Transverse colon (tissue), 4 donors: ENCODE measurements at regions of chr16 and their contacts with region 1.

Region 1: DNA sequence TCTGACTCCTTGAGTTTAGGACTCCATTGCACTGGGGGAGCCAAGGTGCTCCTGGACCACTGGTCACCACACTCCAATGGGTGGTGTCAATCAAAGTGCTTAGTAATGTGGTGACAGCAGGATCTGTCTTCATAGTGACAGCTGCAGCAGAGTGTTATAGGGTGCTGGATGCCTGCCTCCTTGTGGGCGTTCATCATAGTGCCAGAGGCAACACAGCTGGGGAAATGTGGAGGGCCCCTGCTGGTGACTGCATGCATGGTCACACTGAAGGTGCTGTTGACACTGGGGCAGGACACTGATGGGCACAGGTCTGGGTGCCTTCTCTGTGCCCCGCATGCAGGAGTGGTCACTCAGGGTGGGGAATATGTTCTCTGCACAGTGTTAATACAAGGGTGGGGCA is 177.5 kb upstream of the CDH8 start:
- DNase-seq: no peak
- H3K4me3 ChIP-seq: no peak overlapping the region
- H3K27ac ChIP-seq: no peak overlapping the region
- H3K4me1 ChIP-seq: no peaks in the 10 kb centered on the region
- H3K27me3 ChIP-seq: no peaks in the 10 kb centered on the region
- CTCF ChIP-seq: no peak
- EP300 ChIP-seq: no peak
- POLR2A ChIP-seq: no peak

Region 2: DNA sequence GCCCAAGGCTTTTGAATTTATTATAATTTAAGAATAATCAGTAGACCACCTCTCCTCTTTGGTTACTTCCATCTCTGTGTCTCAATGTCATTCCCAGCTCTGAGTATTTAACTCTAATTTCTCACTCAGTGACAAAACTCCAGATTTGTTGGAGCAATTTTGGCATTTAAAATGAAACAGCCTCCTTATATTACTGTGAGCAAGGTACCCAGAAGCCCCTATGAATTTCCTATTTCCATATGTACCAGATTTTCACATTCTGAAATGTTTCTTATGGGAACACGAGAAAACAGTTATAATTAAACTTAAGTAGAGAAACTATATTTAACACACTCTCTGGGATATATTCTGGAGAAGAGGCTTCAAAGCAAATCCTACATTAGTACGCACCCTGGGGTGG is 107.8 kb after region 1 on chr16:
- in situ Hi-C with region 1: loop called in 1 of 4 experiments (anchors 25 kb)
- intact Hi-C with region 1: no loop called
- DNase-seq: no peak
- H3K4me3 ChIP-seq: no peak overlapping the region
- H3K27ac ChIP-seq: no peak overlapping the region
- H3K4me1 ChIP-seq: no peaks in the 10 kb centered on the region
- H3K27me3 ChIP-seq: no peaks in the 10 kb centered on the region
- CTCF ChIP-seq: no peak
- EP300 ChIP-seq: no peak
- POLR2A ChIP-seq: no peak